A549 (cell line): ENCODE measurements at regions of chr7 and their contacts with region 1.

Region 1: DNA sequence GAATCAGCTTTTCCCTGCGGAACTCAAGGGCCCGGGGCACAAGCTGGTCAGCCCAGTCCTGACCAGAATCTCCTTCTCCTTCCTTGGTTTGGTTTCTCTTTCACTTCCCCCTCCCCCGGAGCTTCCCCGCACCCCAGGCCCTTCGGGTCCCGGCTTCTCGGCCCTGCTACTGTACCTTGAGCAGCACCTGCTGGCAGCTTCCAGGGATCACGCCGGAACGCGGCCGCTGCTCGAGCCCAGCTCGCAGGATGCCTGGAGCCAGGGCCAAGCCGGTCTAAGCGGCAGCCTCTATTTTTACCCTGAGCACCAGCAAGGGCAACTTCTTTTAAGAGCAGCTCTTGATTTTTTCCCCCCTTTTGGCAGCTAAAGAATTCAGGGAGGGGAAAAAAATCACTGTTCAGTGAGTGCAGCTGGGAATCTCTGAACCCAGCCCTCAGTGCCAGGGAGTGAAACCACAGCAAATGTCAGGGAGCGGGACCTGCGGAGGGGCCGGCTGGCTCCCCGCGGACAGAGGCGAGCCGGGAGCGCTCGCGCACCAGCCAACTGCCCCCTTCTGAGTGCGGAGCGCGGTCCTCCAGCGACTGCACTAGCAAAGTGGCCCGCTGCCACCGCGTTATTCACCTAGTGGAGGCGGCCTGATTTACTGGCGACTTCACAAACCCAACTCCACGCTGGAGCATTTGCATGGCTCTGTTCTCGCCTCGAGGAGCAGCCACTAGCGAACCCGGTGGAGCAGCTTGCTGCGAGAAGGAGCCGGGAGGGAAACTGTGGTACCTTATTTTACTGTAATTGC is 2.4 kb upstream of the INHBA start:
- DNase-seq: peak; percentile 73 to 87
- ATAC-seq: peak; percentile 98 to 100
- H3K4me3 ChIP-seq: peak overlapping the region; percentile 43
- H3K27ac ChIP-seq: peak overlapping the region; percentile 68 to 82
- H3K4me1 ChIP-seq: no peaks in the 10 kb centered on the region
- CTCF ChIP-seq: peak; percentile 61
- EP300 ChIP-seq: no peak
- POLR2A ChIP-seq: no peak
- RAD21 ChIP-seq: peak; percentile 73 to 86

Region 2: DNA sequence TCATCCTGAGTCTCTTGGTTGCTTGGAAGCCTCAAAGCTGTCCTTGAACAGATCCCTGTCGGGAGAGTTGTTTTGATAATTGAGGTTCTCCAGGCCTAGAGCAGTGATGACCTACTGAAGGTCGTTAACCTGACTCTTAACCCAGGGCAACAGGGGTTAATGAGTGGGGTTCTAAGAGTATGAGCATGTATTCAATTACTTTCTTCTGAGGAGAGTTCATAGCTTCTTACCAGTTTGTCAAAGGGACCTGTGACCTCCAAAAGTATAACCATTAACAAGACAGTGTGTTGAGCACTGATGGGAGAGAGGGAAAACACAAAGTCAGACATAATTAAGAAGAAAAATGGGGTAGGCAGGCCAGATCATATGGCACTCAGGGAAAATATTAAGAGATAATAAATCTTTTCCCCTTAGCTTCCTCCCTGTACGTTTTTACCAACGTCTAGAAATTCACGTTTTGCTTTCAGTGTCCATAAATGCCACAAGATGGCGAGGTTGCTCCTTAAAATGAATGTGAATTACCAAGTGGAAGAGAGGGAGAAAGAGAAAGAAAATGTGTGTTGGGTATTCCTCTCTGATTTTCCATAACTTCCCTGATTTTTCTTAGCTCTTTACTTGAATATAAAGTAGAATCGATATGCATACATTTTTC is 1472.9 kb before region 1 on chr7:
- CTCF ChIA-PET with region 1: interaction called, 24 read pairs
- POLR2A ChIA-PET with region 1: no interaction called
- DNase-seq: peak; percentile 21 to 56
- ATAC-seq: peak; percentile 84 to 88; a peak in 4 of 6 replicates
- H3K4me3 ChIP-seq: no peak overlapping the region
- H3K27ac ChIP-seq: no peak overlapping the region
- H3K4me1 ChIP-seq: no peaks in the 10 kb centered on the region
- CTCF ChIP-seq: peak; percentile 62
- EP300 ChIP-seq: no peak
- POLR2A ChIP-seq: no peak
- RAD21 ChIP-seq: peak; percentile 70

Region 3: GRCh38 chr7:40329601-40330153 is 1375.6 kb before region 1 on chr7:
- CTCF ChIA-PET with region 1: interaction called, 17 read pairs
- POLR2A ChIA-PET with region 1: no interaction called
- DNase-seq: peak; percentile 53
- ATAC-seq: peak; percentile 50 to 66; a peak in 3 of 6 replicates
- H3K4me3 ChIP-seq: no peak overlapping the region
- H3K27ac ChIP-seq: no peak overlapping the region
- H3K4me1 ChIP-seq: no peaks in the 10 kb centered on the region
- CTCF ChIP-seq: peak; percentile 73
- EP300 ChIP-seq: no peak
- POLR2A ChIP-seq: no peak
- RAD21 ChIP-seq: peak; percentile 77 to 78

Region 4: GRCh38 chr7:41685684-41686083 is 19.6 kb before region 1 on chr7:
- CTCF ChIA-PET with region 1: no interaction called
- POLR2A ChIA-PET with region 1: no interaction called
- DNase-seq: no peak
- ATAC-seq: no peak
- H3K4me3 ChIP-seq: no peak overlapping the region
- H3K27ac ChIP-seq: no peak overlapping the region
- H3K4me1 ChIP-seq: no peaks in the 10 kb centered on the region
- CTCF ChIP-seq: no peak
- EP300 ChIP-seq: no peak
- POLR2A ChIP-seq: no peak
- RAD21 ChIP-seq: no peak

Region 5: GRCh38 chr7:41716691-41717090 is 11.4 kb after region 1 on chr7:
- CTCF ChIA-PET with region 1: interaction called, 39 read pairs
- POLR2A ChIA-PET with region 1: no interaction called
- DNase-seq: no peak
- ATAC-seq: no peak
- H3K4me3 ChIP-seq: no peak overlapping the region
- H3K27ac ChIP-seq: no peak overlapping the region
- H3K4me1 ChIP-seq: no peaks in the 10 kb centered on the region
- CTCF ChIP-seq: no peak
- EP300 ChIP-seq: no peak
- POLR2A ChIP-seq: no peak
- RAD21 ChIP-seq: no peak